ENCODE measurements at regions of chr6 and their contacts with region 1.

Region 1: GRCh38 chr6:25278914-25279747 is at the start of gene CARMIL1:
- DNase-seq: peak; percentile 93
- total RNA-seq, gene CARMIL1: 19.8 to 20.4 TPM

Region 2: DNA sequence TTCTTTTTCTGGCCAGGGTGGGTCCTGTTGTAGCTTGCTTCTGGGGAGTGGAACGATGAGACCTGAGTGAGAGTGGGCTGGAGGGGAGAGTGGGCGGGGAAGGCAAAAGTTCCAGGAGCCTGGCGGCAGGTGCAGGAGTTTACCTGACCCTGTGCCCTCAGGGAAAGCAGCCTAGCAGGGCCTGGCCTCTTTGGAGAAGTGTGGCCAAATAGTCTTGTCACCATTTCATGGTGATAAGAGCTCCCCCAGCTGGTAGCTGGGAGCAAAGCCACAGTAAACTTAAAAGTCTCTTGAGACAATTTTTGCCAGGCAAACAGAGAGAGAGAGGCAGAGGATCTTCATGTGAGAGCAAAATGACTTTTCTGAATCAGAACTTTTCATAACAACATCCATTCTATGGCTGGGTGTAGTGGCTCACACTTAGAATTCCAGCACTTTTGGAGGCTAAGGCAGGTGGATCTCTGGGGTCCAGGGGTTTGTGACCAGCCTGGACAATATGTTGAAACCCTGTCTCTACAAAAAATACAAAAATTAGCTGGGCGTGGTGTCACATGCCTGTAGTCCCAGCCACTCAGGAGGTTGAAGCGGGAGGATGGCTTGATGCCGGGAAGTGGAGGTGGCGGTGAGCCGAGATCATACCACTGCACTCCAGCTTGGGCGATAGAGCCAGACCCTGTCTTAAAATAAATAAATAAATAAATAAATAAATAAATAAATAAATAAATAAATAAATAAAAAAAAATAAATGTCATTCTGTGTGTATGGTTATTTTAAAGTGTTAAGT is 211.1 kb after region 1 on chr6:
- intact Hi-C with region 1: loop called (anchors 5 to 10 kb)
- DNase-seq: peak; percentile 86

Region 3: GRCh38 chr6:25519856-25520255 is 240.7 kb after region 1 on chr6:
- intact Hi-C with region 1: no loop called
- DNase-seq: no peak

Region 4: GRCh38 chr6:25862189-25862588 is 583.1 kb after region 1 on chr6:
- intact Hi-C with region 1: no loop called
- DNase-seq: no peak

Measured in posterior vena cava (tissue), 2 donors.